CD14-positive monocyte (primary cell): ENCODE measurements at regions of chr7 and their contacts with region 1.

Region 1: DNA sequence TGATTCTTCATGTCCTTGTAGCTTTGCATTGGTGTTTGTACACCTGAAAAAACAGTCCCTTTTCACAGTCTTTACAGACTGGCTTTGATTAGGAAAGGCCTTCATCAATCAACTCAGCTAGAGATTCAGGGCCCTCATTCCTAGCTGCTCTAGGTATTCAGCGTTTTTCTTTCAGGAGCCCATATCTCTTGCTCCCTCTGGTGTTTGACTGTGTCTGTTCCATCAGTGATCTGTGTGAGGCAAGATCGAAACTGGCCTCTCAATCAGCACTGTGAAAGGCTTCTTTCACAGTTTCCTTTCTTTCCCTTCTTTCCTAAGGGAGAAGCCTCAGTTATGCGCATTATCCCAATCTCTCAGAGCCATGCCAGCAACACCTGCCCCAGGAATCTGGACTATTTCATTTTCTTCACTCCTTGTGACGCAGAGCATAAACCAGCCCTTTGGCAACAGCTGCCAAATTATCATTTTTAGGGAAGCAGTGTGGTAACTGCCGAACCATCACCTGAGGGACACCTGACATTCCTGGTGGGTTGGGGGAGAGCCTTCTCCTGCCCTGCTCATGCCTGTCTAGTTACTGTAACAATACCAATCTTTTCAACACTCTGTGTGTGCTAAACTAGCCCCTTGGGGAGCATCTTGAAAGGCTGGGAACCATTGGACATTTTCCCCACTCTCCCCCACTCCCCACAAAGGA is 75.7 kb upstream of the CCDC71L start:
- DNase-seq: peak; percentile 67 to 81 (median 77)
- H3K4me3 ChIP-seq: peak overlapping the region in 2 of 3 experiments; percentile 33 to 57
- H3K4me3 Mint-ChIP-seq: peak overlapping the region; percentile 67 to 84
- H3K27ac ChIP-seq: no peak overlapping the region
- H3K27ac Mint-ChIP-seq: peak overlapping the region in 6 of 7 donors; percentile 27 to 84 (median 72)
- H3K4me1 ChIP-seq: peaks cover 7 to 20% of the 10 kb centered on the region in 2 donors
- H3K4me1 Mint-ChIP-seq: peaks cover 20% of the 10 kb centered on the region
- H3K27me3 ChIP-seq: no peaks in the 10 kb centered on the region
- H3K27me3 Mint-ChIP-seq: peaks cover 2 to 9% (median 6%) of the 10 kb centered on the region in 3 donors
- CTCF ChIP-seq: peak; percentile 87

Region 2: GRCh38 chr7:106176414-106177299 is 560.0 kb before region 1 on chr7:
- intact Hi-C with region 1: loop called in 1 of 2 experiments (anchors 5 kb)
- DNase-seq: peak; percentile 44 to 66 (median 60)
- H3K4me3 ChIP-seq: no peak overlapping the region
- H3K4me3 Mint-ChIP-seq: peak overlapping the region in 1 of 2 donors; percentile 40
- H3K27ac ChIP-seq: no peak overlapping the region
- H3K27ac Mint-ChIP-seq: peak overlapping the region in 1 of 7 donors; percentile 35
- H3K4me1 ChIP-seq: no peaks in the 10 kb centered on the region
- H3K4me1 Mint-ChIP-seq: peaks cover 4% of the 10 kb centered on the region
- H3K27me3 ChIP-seq: peaks cover 0 to 5% of the 10 kb centered on the region in 2 donors
- H3K27me3 Mint-ChIP-seq: peaks cover 9 to 26% (median 12%) of the 10 kb centered on the region in 3 donors
- CTCF ChIP-seq: peak; percentile 86

Region 3: DNA sequence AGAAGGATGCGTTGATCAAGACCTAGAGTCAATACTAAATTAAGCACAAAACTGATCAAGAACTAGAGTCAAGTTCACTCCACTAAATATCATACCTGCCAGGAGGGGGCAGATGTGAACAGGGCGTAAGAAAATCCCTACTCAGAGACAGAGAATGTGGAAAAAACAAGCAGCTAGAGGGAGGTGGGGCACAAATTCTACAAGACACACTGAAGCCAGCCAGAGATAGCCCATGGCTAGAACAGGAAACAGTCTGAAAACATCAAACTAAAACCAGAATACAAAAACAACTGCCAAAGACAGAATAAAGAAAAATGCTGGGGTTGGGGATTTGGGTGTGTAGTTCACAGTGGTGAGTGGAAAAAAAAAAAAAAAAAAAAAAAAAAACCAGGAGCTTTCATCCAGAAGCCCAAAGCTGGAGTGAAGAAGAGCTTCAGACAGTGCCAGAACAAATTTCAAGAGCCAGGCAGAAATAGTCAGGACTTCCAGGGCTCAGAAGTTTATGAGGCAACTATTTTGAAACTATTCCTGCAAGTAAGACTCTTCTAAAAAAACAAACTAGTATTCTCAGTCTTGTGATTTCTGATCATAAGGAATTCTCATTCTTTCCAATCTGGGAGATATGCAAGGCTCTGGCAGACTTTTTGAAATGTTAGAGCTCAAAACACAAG is 194.0 kb before region 1 on chr7:
- intact Hi-C with region 1: loop called (anchors 5 to 10 kb)
- DNase-seq: peak; percentile 54 to 66 (median 58)
- H3K4me3 ChIP-seq: no peak overlapping the region
- H3K4me3 Mint-ChIP-seq: no peak overlapping the region
- H3K27ac ChIP-seq: no peak overlapping the region
- H3K27ac Mint-ChIP-seq: peak overlapping the region in 2 of 7 donors; percentile 8 to 50
- H3K4me1 ChIP-seq: peaks cover 0 to 5% of the 10 kb centered on the region in 2 donors
- H3K4me1 Mint-ChIP-seq: peaks cover 8% of the 10 kb centered on the region
- H3K27me3 ChIP-seq: no peaks in the 10 kb centered on the region
- H3K27me3 Mint-ChIP-seq: peaks cover 0 to 5% (median 0%) of the 10 kb centered on the region in 3 donors
- CTCF ChIP-seq: peak; percentile 70

Region 4: GRCh38 chr7:106704000-106704840 is 32.4 kb before region 1 on chr7:
- intact Hi-C with region 1: loop called in 1 of 2 experiments (anchors 5 kb)
- DNase-seq: no peak
- H3K4me3 ChIP-seq: no peak overlapping the region
- H3K4me3 Mint-ChIP-seq: no peak overlapping the region
- H3K27ac ChIP-seq: no peak overlapping the region
- H3K27ac Mint-ChIP-seq: no peak overlapping the region
- H3K4me1 ChIP-seq: no peaks in the 10 kb centered on the region
- H3K4me1 Mint-ChIP-seq: no peaks in the 10 kb centered on the region
- H3K27me3 ChIP-seq: no peaks in the 10 kb centered on the region
- H3K27me3 Mint-ChIP-seq: peaks cover 0 to 2% (median 2%) of the 10 kb centered on the region in 3 donors
- CTCF ChIP-seq: no peak

Region 5: GRCh38 chr7:106793015-106793975 is 56.6 kb after region 1 on chr7:
- intact Hi-C with region 1: no loop called
- DNase-seq: peak in 2 of 3 donors; percentile 21 to 52
- H3K4me3 ChIP-seq: no peak overlapping the region
- H3K4me3 Mint-ChIP-seq: no peak overlapping the region
- H3K27ac ChIP-seq: no peak overlapping the region
- H3K27ac Mint-ChIP-seq: no peak overlapping the region
- H3K4me1 ChIP-seq: no peaks in the 10 kb centered on the region
- H3K4me1 Mint-ChIP-seq: no peaks in the 10 kb centered on the region
- H3K27me3 ChIP-seq: no peaks in the 10 kb centered on the region
- H3K27me3 Mint-ChIP-seq: peaks cover 1 to 5% (median 4%) of the 10 kb centered on the region in 3 donors
- CTCF ChIP-seq: peak; percentile 88

Region 6: GRCh38 chr7:106891547-106892410 is 155.1 kb after region 1 on chr7:
- intact Hi-C with region 1: no loop called
- DNase-seq: no peak
- H3K4me3 ChIP-seq: no peak overlapping the region
- H3K4me3 Mint-ChIP-seq: no peak overlapping the region
- H3K27ac ChIP-seq: peak overlapping the region in 1 of 2 donors; percentile 48
- H3K27ac Mint-ChIP-seq: peak overlapping the region in 4 of 7 donors; percentile 19 to 63 (median 38)
- H3K4me1 ChIP-seq: no peaks in the 10 kb centered on the region
- H3K4me1 Mint-ChIP-seq: peaks cover 16% of the 10 kb centered on the region
- H3K27me3 ChIP-seq: no peaks in the 10 kb centered on the region
- H3K27me3 Mint-ChIP-seq: no peaks in the 10 kb centered on the region
- CTCF ChIP-seq: no peak